CD14-positive monocyte (primary cell): ENCODE measurements at regions of chr12 and their contacts with region 1.

Region 1: DNA sequence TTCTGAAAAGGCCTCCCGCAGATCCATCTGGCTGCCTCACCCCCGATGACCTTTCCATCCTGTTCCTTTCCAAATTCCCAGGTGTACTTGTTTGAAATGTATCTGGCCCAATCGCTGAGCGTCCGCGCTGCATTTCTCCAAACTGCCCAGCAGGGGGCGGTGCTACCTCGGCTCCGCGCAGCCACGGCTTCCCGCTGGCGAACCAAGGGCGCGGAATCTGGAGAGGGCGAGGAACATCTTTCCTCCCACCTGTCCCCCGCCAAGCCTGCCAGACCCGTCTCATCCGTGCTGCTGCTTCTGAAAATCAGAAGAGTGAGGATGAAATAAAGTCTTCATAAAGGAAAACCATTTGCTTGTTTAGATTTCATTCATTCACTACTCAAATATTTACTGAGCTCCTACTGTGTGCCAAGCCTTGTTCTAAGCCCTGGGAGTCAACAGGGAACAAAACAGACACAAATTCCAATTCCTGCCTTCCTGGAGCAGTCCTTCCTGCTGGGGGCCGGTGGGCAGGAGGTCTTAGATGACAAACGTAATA is 16.8 kb upstream of the MYL2 start:
- DNase-seq: peak; percentile 32 to 52 (median 47)
- H3K4me3 ChIP-seq: no peak overlapping the region
- H3K4me3 Mint-ChIP-seq: peak overlapping the region in 1 of 2 donors; percentile 26
- H3K27ac ChIP-seq: no peak overlapping the region
- H3K27ac Mint-ChIP-seq: no peak overlapping the region
- H3K4me1 ChIP-seq: peaks cover 6 to 7% of the 10 kb centered on the region in 2 donors
- H3K4me1 Mint-ChIP-seq: peaks cover 13% of the 10 kb centered on the region
- H3K27me3 ChIP-seq: no peaks in the 10 kb centered on the region
- H3K27me3 Mint-ChIP-seq: peaks cover 7 to 17% (median 11%) of the 10 kb centered on the region in 3 donors
- CTCF ChIP-seq: peak; percentile 99

Region 2: GRCh38 chr12:111298582-111299436 is 361.6 kb after region 1 on chr12:
- intact Hi-C with region 1: loop called in 1 of 2 experiments (anchors 5 kb)
- DNase-seq: peak; percentile 20 to 51 (median 43)
- H3K4me3 ChIP-seq: no peak overlapping the region
- H3K4me3 Mint-ChIP-seq: no peak overlapping the region
- H3K27ac ChIP-seq: no peak overlapping the region
- H3K27ac Mint-ChIP-seq: no peak overlapping the region
- H3K4me1 ChIP-seq: no peaks in the 10 kb centered on the region
- H3K4me1 Mint-ChIP-seq: no peaks in the 10 kb centered on the region
- H3K27me3 ChIP-seq: no peaks in the 10 kb centered on the region
- H3K27me3 Mint-ChIP-seq: peaks cover 0 to 4% (median 2%) of the 10 kb centered on the region in 3 donors
- CTCF ChIP-seq: peak; percentile 96

Region 3: DNA sequence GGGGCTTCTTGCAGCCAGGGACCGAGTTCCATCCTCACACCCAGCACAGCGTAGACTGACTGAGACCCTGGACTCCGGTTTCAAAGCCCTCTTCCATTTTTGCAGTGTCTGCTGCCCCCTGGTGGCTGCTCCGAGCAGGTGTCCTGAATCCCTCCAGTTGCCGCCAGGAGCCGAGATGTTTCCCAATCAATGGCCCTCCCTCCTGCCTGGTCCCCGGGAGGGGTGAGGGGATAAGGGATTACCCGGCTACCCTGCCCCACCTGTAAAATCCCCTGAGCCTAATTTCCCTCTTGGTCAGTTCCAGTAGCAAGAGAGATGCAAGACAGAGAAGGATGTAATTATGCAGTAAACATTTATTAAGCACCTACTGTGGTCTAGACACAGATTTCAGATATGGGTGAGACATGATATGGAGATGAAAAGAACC is 376.7 kb after region 1 on chr12:
- intact Hi-C with region 1: loop called (anchors 5 kb)
- DNase-seq: peak; percentile 65 to 82 (median 66)
- H3K4me3 ChIP-seq: no peak overlapping the region
- H3K4me3 Mint-ChIP-seq: peak overlapping the region; percentile 27 to 68
- H3K27ac ChIP-seq: no peak overlapping the region
- H3K27ac Mint-ChIP-seq: peak overlapping the region; percentile 23 to 95 (median 91)
- H3K4me1 ChIP-seq: peaks cover 46 to 53% of the 10 kb centered on the region in 2 donors
- H3K4me1 Mint-ChIP-seq: peaks cover 58% of the 10 kb centered on the region
- H3K27me3 ChIP-seq: no peaks in the 10 kb centered on the region
- H3K27me3 Mint-ChIP-seq: peaks cover 0 to 6% (median 3%) of the 10 kb centered on the region in 3 donors
- CTCF ChIP-seq: peak; percentile 99